ENCODE measurements at regions of chr11 and their contacts with region 1.

Region 1: GRCh38 chr11:131867457-131868257 is 497.2 kb downstream of the NTM start:
- DNase-seq: peak; percentile 53 to 70
- ATAC-seq: peak in 1 of 4 donors; percentile 58
- H3K4me3 ChIP-seq: no peak overlapping the region
- H3K27ac ChIP-seq: no peak overlapping the region
- H3K4me1 ChIP-seq: no peaks in the 10 kb centered on the region
- H3K27me3 ChIP-seq: no peaks in the 10 kb centered on the region
- CTCF ChIP-seq: peak; percentile 15

Region 2: GRCh38 chr11:132126973-132127899 is 259.6 kb after region 1 on chr11:
- intact Hi-C with region 1: loop called in 1 of 2 experiments (anchors 10 kb)
- DNase-seq: peak in 1 of 2 donors; percentile 28
- ATAC-seq: peak in 2 of 4 donors; percentile 44 to 82
- H3K4me3 ChIP-seq: peak overlapping the region; percentile 46
- H3K27ac ChIP-seq: no peak overlapping the region
- H3K4me1 ChIP-seq: peaks cover 4% of the 10 kb centered on the region
- H3K27me3 ChIP-seq: no peaks in the 10 kb centered on the region
- CTCF ChIP-seq: peak; percentile 26

Measured in psoas muscle (tissue), 8 donors.